Tibial artery (tissue), 4 donors: ENCODE measurements at regions of chr5 and their contacts with region 1.

Region 1: GRCh38 chr5:159098603-159099436 is 896 bp downstream of the EBF1 start:
- DNase-seq: no peak
- H3K4me3 ChIP-seq: peak overlapping the region; percentile 80 to 82
- H3K27ac ChIP-seq: peak overlapping the region; percentile 87 to 97
- H3K4me1 ChIP-seq: peaks cover 0 to 40% (median 22%) of the 10 kb centered on the region in 4 donors
- H3K27me3 ChIP-seq: no peaks in the 10 kb centered on the region
- CTCF ChIP-seq: no peak

Region 2: GRCh38 chr5:158695595-158696330 is 403.1 kb before region 1 on chr5:
- intact Hi-C with region 1: loop called (anchors 2 kb)
- DNase-seq: peak; percentile 68 to 84
- H3K4me3 ChIP-seq: no peak overlapping the region
- H3K27ac ChIP-seq: peak overlapping the region in 1 of 2 donors; percentile 14
- H3K4me1 ChIP-seq: peaks cover 0 to 63% (median 35%) of the 10 kb centered on the region in 4 donors
- H3K27me3 ChIP-seq: no peaks in the 10 kb centered on the region
- CTCF ChIP-seq: peak; percentile 97

Region 3: GRCh38 chr5:158777647-158778350 is 321.0 kb before region 1 on chr5:
- intact Hi-C with region 1: loop called (anchors 5 kb)
- DNase-seq: peak in 1 of 2 donors; percentile 37
- H3K4me3 ChIP-seq: no peak overlapping the region
- H3K27ac ChIP-seq: peak overlapping the region; percentile 67 to 72
- H3K4me1 ChIP-seq: peaks cover 0 to 85% (median 38%) of the 10 kb centered on the region in 4 donors
- H3K27me3 ChIP-seq: no peaks in the 10 kb centered on the region
- CTCF ChIP-seq: no peak

Region 4: GRCh38 chr5:159050316-159051143 is 48.3 kb before region 1 on chr5:
- intact Hi-C with region 1: loop called (anchors 5 kb)
- DNase-seq: no peak
- H3K4me3 ChIP-seq: peak overlapping the region; percentile 45 to 52
- H3K27ac ChIP-seq: peak overlapping the region; percentile 87 to 89
- H3K4me1 ChIP-seq: peaks cover 0 to 90% (median 34%) of the 10 kb centered on the region in 4 donors
- H3K27me3 ChIP-seq: no peaks in the 10 kb centered on the region
- CTCF ChIP-seq: no peak